Right ventricle myocardium inferior (tissue), 1 donor: ENCODE measurements at regions of chr3 and their contacts with region 1.

Region 1: DNA sequence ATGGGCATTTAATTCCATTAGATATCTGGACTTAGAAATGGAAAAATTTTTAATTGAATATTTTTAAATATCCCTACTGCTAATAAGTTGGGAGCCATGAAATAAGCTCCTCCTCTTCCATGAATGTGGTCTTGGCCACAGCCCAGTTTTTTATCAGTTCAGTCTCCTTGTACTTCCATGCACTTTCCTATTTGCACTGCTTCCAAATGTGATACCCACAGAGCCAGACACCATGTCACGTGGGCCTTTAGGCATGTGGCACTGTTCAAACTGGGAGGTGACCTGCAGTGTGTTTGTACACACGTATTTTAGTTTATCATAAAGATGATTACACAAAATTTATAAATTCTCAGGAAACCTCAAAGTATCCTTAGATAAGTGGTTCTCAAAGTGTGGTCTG is 80.1 kb upstream of the DGKG start:
- DNase-seq: no peak
- ATAC-seq: peak; percentile 92

Region 2: DNA sequence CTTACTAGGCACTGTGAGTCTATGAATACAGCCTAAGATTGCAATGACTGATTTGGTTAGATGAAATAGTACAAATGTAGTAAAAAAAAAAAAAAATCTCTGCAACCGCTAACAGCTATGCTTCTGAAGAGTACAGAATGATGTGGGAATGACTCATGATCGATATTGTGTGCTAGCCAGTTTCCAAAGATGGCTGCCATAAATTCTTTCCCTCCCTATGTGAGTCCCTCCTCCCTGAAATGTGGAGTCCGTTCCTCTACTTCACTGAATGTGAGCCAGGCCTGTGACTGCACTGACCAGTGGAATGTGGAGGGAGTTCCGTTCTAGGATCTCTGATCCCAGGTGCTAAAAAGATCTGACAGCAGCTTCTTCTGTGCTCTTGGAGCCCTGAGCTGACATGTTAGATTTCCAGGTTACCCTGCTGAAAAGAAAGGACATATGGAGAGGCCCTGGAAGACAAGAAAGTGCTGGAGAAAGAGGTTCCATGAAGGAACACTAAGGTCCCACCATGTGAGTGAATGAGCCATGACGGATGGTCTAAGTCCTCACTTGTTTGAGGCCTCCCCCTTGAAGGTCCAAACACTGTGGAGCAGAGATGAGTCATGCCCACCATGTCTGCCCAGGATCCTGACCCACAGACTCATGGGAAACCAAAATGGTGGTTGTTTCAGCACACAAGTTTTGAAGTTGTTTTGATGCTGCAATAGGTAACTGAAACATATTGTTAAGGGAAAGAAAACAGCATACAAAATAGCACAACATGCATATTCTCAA is 126.4 kb before region 1 on chr3:
- intact Hi-C with region 1: loop called (anchors 5 kb)
- DNase-seq: no peak
- ATAC-seq: no peak

Region 3: GRCh38 chr3:186783073-186783730 is 341.0 kb after region 1 on chr3 and contains the start of gene EIF4A2:
- intact Hi-C with region 1: no loop called
- DNase-seq: peak; percentile 94
- ATAC-seq: peak; percentile 87
- total RNA-seq, gene EIF4A2: 422 TPM